Esophagus muscularis mucosa (tissue), 4 donors: ENCODE measurements at regions of chr3 and their contacts with region 1.

Region 1: GRCh38 chr3:137325934-137326333 is 368.2 kb downstream of the IL20RB start:
- DNase-seq: no peak
- H3K4me3 ChIP-seq: no peak overlapping the region
- H3K27ac ChIP-seq: no peak overlapping the region
- H3K4me1 ChIP-seq: no peaks in the 10 kb centered on the region
- H3K27me3 ChIP-seq: peaks cover 0 to 4% (median 0%) of the 10 kb centered on the region in 4 donors
- CTCF ChIP-seq: no peak
- EP300 ChIP-seq: no peak
- POLR2A ChIP-seq: no peak

Region 2: DNA sequence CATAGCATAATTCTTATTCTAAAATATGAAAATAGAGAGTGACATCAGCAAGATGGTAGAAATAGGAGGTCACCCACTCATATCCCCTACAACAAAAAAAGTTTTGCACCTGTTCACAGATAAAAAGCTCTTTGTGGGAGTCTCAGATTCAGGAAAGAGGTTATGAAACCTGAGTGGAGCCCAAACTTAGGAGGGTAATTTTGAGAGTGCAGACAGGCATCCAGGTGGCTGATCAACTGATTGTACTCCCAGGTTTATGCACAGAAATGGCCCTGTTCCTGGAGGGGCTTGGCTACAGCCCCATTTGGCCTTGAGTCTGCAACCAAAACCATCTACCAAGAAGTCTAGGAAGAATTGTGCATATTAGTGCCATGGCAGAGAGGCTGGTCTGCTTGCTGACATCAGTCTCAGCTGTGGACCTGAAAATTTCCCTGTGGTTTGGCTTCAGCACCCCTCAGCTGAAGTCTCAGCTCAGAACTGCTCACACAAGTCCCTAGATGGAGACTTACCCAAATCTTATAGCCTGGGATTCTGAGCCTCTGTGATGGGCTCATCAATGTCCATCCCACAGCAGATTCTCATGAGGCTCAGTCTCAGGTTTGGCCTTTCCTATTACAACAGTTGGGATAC is 76.5 kb before region 1 on chr3:
- intact Hi-C with region 1: loop called (anchors 2 kb)
- DNase-seq: no peak
- H3K4me3 ChIP-seq: no peak overlapping the region
- H3K27ac ChIP-seq: no peak overlapping the region
- H3K4me1 ChIP-seq: no peaks in the 10 kb centered on the region
- H3K27me3 ChIP-seq: no peaks in the 10 kb centered on the region
- CTCF ChIP-seq: no peak
- EP300 ChIP-seq: no peak
- POLR2A ChIP-seq: no peak